Upper lobe of right lung (tissue), 1 donor: ENCODE measurements at regions of chr5 and their contacts with region 1.

Region 1: GRCh38 chr5:68456756-68457217 is 241.2 kb downstream of the PIK3R1 start:
- DNase-seq: no peak
- ATAC-seq: peak; percentile 95
- H3K4me3 ChIP-seq: no peak overlapping the region
- H3K27ac ChIP-seq: no peak overlapping the region
- H3K4me1 ChIP-seq: peaks cover 13% of the 10 kb centered on the region
- H3K27me3 ChIP-seq: no peaks in the 10 kb centered on the region
- CTCF ChIP-seq: no peak

Region 2: GRCh38 chr5:68287976-68288706 is 168.6 kb before region 1 on chr5:
- intact Hi-C with region 1: loop called (anchors 10 kb)
- DNase-seq: peak; percentile 76
- ATAC-seq: peak; percentile 86
- H3K4me3 ChIP-seq: peak overlapping the region; percentile 56
- H3K27ac ChIP-seq: peak overlapping the region; percentile 80
- H3K4me1 ChIP-seq: peaks cover 81% of the 10 kb centered on the region
- H3K27me3 ChIP-seq: no peaks in the 10 kb centered on the region
- CTCF ChIP-seq: no peak